ENCODE measurements at regions of chr5 and their contacts with region 1.

Region 1: GRCh38 chr5:65481635-65482295 is at the start of gene ADAMTS6:
- DNase-seq: peak; percentile 96
- H3K4me3 ChIP-seq: peak within 1 kb of the TSS; percentile 68
- H3K27ac ChIP-seq: peak within 1 kb of the TSS; percentile 85
- H3K27me3 ChIP-seq: no peaks in the 10 kb centered on the region
- CTCF ChIP-seq: no peak
- polyA plus RNA-seq, gene ADAMTS6: 21.3 and 22.5 TPM in 2 replicates

Region 2: GRCh38 chr5:64634997-64635686 is 846.6 kb before region 1 on chr5:
- CTCF ChIA-PET with region 1: interaction called, 25 read pairs
- POLR2A ChIA-PET with region 1: no interaction called
- DNase-seq: peak; percentile 15
- H3K4me3 ChIP-seq: no peak overlapping the region
- H3K27ac ChIP-seq: no peak overlapping the region
- H3K27me3 ChIP-seq: no peaks in the 10 kb centered on the region
- CTCF ChIP-seq: peak; percentile 66

Region 3: GRCh38 chr5:64784451-64785025 is 697.2 kb before region 1 on chr5:
- CTCF ChIA-PET with region 1: interaction called, 13 read pairs
- POLR2A ChIA-PET with region 1: no interaction called
- DNase-seq: peak; percentile 67
- H3K4me3 ChIP-seq: no peak overlapping the region
- H3K27ac ChIP-seq: no peak overlapping the region
- H3K27me3 ChIP-seq: no peaks in the 10 kb centered on the region
- CTCF ChIP-seq: peak; percentile 78

Region 4: DNA sequence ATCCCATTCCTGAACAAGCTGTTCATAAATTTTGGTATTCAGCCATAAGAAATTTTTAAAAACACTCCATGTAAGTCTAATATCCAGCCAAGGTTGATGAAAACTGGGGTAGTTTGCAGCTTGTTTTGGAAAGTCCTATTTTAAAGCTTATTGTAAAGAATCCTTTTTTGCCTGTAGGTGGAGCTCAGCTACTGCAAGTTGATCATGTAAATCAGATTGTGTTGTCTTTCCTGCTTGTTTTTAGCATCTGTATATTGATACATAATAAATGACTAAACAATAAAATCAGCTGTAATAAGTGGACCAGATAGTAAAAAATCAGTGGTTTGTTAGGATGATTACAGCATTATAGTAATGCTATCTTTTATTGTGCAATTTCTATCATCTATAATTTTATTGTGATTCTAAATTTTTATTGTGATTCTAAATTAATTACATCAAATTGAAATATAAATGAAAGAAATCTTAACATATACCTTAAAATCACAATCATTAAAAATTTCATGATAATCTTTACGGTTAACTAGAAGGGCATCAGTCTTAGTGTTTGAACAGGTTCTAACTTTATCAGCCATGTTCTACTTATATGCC is 670.6 kb before region 1 on chr5:
- CTCF ChIA-PET with region 1: interaction called, 123 read pairs
- POLR2A ChIA-PET with region 1: interaction called, 3 read pairs
- DNase-seq: peak; percentile 27
- H3K4me3 ChIP-seq: no peak overlapping the region
- H3K27ac ChIP-seq: no peak overlapping the region
- H3K27me3 ChIP-seq: no peaks in the 10 kb centered on the region
- CTCF ChIP-seq: peak; percentile 75

Region 5: DNA sequence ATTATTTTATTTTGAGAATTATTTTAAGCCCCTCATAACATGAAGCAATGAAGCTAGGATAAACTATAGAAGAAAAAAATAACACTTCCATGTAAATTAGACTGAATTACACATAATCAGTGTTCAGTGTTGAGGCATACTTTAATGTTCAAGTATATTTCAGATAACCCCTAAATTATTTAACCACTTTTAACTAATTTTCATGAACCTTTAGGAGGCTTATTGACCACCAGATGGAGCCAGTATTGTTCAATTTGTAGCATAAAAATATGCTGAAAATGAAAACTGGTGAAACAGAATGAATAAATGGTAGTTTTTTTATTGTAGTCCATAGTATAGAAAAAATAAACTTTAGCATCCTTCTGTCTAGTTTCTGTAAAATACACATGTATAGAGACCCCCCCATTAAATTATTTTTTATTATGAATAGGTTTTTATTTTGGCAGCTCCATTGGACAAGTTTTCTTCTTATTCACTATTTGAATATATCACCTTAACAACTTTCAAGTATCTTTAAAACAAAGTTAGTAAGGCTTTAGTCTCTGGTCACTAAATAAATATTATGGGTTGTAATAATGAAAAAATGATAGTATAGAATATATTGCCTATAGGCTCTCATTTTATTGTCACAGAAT is 522.9 kb before region 1 on chr5:
- CTCF ChIA-PET with region 1: interaction called, 77 read pairs
- POLR2A ChIA-PET with region 1: no interaction called
- DNase-seq: peak; percentile 13
- H3K4me3 ChIP-seq: no peak overlapping the region
- H3K27ac ChIP-seq: no peak overlapping the region
- H3K27me3 ChIP-seq: no peaks in the 10 kb centered on the region
- CTCF ChIP-seq: peak; percentile 73

Region 6: GRCh38 chr5:65102828-65103711 is 378.7 kb before region 1 on chr5:
- CTCF ChIA-PET with region 1: interaction called, 37 read pairs
- POLR2A ChIA-PET with region 1: interaction called, 3 read pairs
- DNase-seq: no peak
- H3K4me3 ChIP-seq: 0 out of 2 replicates have a peak overlapping the region, but pooled peaks have one; percentile 4
- H3K27ac ChIP-seq: peak overlapping the region; percentile 82
- H3K27me3 ChIP-seq: no peaks in the 10 kb centered on the region
- CTCF ChIP-seq: no peak

Region 7: GRCh38 chr5:65125591-65126541 is 355.9 kb before region 1 on chr5:
- CTCF ChIA-PET with region 1: interaction called, 4 read pairs
- POLR2A ChIA-PET with region 1: interaction called, 31 read pairs
- DNase-seq: no peak
- H3K4me3 ChIP-seq: no peak overlapping the region
- H3K27ac ChIP-seq: peak overlapping the region; percentile 99
- H3K27me3 ChIP-seq: no peaks in the 10 kb centered on the region
- CTCF ChIP-seq: no peak